ENCODE measurements at regions of chr21 and their contacts with region 1.

Region 1: GRCh38 chr21:45302078-45303055 is 14.7 kb upstream of the POFUT2 start:
- DNase-seq: peak; percentile 27 to 87 (median 65)
- ATAC-seq: peak; percentile 74 to 85
- H3K4me3 Mint-ChIP-seq: peak overlapping the region in 5 of 10 donors; percentile 23 to 63 (median 29)
- H3K27ac Mint-ChIP-seq: peak overlapping the region; percentile 63 to 93 (median 87)
- H3K4me1 Mint-ChIP-seq: peaks cover 5 to 24% (median 17%) of the 10 kb centered on the region in 4 donors
- H3K27me3 Mint-ChIP-seq: no peaks in the 10 kb centered on the region

Region 2: DNA sequence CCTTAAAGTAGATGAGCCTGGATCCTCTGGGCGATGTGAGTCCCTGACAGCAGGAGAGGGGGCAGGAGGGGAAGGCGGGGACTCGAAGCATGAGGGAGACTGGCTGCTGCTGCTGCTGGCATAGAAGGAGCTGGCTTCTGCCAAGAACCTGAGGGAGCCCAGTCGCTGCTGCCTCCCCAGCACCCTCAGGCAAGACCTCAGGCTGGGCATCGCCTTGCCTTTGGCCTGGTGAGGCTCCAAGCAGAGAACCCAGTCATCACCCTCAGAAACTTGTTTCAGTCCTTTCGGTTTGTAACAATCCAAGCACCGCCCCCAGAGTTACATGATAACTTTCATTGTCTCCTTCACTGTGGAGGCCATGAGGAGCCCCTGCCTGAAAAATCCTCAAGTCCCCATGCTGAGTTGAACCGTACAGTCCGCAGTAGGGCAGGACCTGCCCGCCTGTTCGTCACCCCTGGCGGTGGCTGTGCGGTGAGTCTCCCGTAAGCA is 53.4 kb before region 1 on chr21:
- POLR2A ChIA-PET with region 1: no interaction called
- DNase-seq: no peak
- ATAC-seq: no peak
- H3K4me3 Mint-ChIP-seq: no peak overlapping the region
- H3K27ac Mint-ChIP-seq: no peak overlapping the region
- H3K4me1 Mint-ChIP-seq: no peaks in the 10 kb centered on the region
- H3K27me3 Mint-ChIP-seq: peaks cover 0 to 13% (median 0%) of the 10 kb centered on the region in 5 donors

Region 3: GRCh38 chr21:45322960-45323461 is 20.6 kb after region 1 on chr21:
- POLR2A ChIA-PET with region 1: interaction called, 14 read pairs
- DNase-seq: peak in 1 of 10 donors; percentile 54
- ATAC-seq: no peak
- H3K4me3 Mint-ChIP-seq: peak overlapping the region in 9 of 10 donors; percentile 51 to 89 (median 83)
- H3K27ac Mint-ChIP-seq: peak overlapping the region; percentile 88 to 99 (median 98)
- H3K4me1 Mint-ChIP-seq: peaks cover 6 to 50% (median 27%) of the 10 kb centered on the region in 4 donors
- H3K27me3 Mint-ChIP-seq: peaks cover 0 to 4% (median 0%) of the 10 kb centered on the region in 5 donors

Region 4: DNA sequence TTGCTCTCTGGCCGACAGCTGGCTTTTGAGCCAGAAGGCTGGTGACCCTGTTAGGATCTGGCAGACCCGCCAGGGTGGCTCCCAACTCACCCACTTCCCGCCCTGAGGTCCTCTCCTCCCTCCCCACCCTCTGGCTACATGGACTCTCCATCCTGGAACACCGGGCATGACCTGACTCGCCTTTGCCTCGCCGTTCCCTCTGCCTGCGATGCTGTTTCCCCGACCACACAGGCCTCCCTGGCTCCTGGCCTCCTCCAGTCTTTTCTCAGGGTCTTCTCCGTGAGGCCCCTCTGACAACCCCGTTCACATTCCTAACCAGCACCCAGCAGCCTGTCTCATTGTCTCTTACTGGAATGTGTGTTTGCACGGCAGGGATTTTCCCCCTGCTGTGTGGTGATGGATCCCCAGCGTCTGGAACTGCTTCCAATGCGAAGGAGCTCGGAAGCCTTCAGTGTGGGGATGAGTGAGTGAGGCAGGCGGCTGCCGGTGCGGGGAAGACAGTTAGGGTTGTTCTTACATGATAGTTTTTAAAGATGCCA is 31.3 kb after region 1 on chr21:
- POLR2A ChIA-PET with region 1: no interaction called
- DNase-seq: peak in 1 of 10 donors; percentile 49
- ATAC-seq: no peak
- H3K4me3 Mint-ChIP-seq: no peak overlapping the region
- H3K27ac Mint-ChIP-seq: peak overlapping the region in 3 of 10 donors; percentile 1 to 36 (median 19)
- H3K4me1 Mint-ChIP-seq: peaks cover 0 to 2% (median 0%) of the 10 kb centered on the region in 4 donors
- H3K27me3 Mint-ChIP-seq: no peaks in the 10 kb centered on the region